Common myeloid progenitor, CD34-positive (primary cell): ENCODE measurements at regions of chr5 and their contacts with region 1.

Region 1: DNA sequence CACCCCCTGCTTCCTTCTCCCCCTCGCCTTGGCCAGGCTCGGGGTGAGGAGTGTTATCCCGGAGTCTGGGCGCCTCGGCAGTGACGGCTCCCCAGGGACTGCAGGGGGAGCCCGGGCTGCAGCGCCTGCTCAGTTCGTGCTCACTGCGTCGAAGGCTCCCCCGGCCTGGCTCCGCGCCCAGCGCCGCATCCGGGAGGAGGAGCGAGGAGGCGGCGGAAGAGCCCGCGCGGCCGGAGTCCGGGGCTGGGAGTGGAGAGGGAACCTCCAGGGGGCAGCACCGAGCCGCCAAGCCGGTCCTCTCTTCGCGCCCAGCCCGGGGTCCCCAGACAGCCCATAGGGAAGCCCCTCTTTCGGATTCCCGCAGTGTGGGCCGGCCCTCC is 1.3 kb upstream of the EGR1 start:
- DNase-seq: peak; percentile 95 to 97 (median 95)
- H3K4me3 ChIP-seq: peak overlapping the region; percentile 73 to 89 (median 80)
- H3K27ac ChIP-seq: peak overlapping the region; percentile 66 to 88
- H3K4me1 ChIP-seq: peaks cover 2 to 43% (median 36%) of the 10 kb centered on the region in 4 experiments
- H3K27me3 ChIP-seq: peaks cover 0 to 24% (median 8%) of the 10 kb centered on the region in 5 experiments

Region 2: GRCh38 chr5:138491669-138492559 is 27.9 kb after region 1 on chr5:
- CTCF ChIA-PET with region 1: interaction called, 494 read pairs
- POLR2A ChIA-PET with region 1: interaction called, 9 read pairs
- DNase-seq: peak; percentile 82 to 91 (median 88)
- H3K4me3 ChIP-seq: peak overlapping the region; percentile 24 to 78 (median 64)
- H3K27ac ChIP-seq: peak overlapping the region in 1 of 2 experiments; percentile 26
- H3K4me1 ChIP-seq: peaks cover 0 to 18% (median 17%) of the 10 kb centered on the region in 4 experiments
- H3K27me3 ChIP-seq: peaks cover 9 to 38% (median 12%) of the 10 kb centered on the region in 5 experiments